Activated T-helper 1 cell treated with anti-CD3 and anti-CD28 coated beads, Interleukin-12 subunit alpha, Interleukin-12 subunit beta, Interleukin-2, Interleukin-4 antibody, amounts not matched to agents 30 ng/mL and 10 ng/mL and 1 ng/mL, durations not matched to agents 14 hours and 24 hours and 36 hours (primary cell): ENCODE measurements at regions of chr1 and their contacts with region 1.

Region 1: GRCh38 chr1:46527474-46528296 is 23.8 kb downstream of the KNCN start:
- DNase-seq: peak; percentile 64
- H3K4me3 Mint-ChIP-seq: no peak overlapping the region
- H3K27ac Mint-ChIP-seq: peak overlapping the region; percentile 18
- H3K4me1 Mint-ChIP-seq: peaks cover 23% of the 10 kb centered on the region
- H3K27me3 Mint-ChIP-seq: peaks cover 16% of the 10 kb centered on the region

Region 2: GRCh38 chr1:46043458-46044017 is 484.1 kb before region 1 on chr1:
- intact Hi-C with region 1: no loop called
- DNase-seq: no peak
- H3K4me3 Mint-ChIP-seq: no peak overlapping the region
- H3K27ac Mint-ChIP-seq: no peak overlapping the region
- H3K4me1 Mint-ChIP-seq: no peaks in the 10 kb centered on the region
- H3K27me3 Mint-ChIP-seq: peaks cover 1% of the 10 kb centered on the region

Region 3: GRCh38 chr1:46406881-46407608 is 120.6 kb before region 1 on chr1:
- intact Hi-C with region 1: loop called (anchors 1 kb)
- DNase-seq: no peak
- H3K4me3 Mint-ChIP-seq: no peak overlapping the region
- H3K27ac Mint-ChIP-seq: no peak overlapping the region
- H3K4me1 Mint-ChIP-seq: no peaks in the 10 kb centered on the region
- H3K27me3 Mint-ChIP-seq: no peaks in the 10 kb centered on the region

Region 4: GRCh38 chr1:46477153-46477929 is 50.3 kb before region 1 on chr1:
- intact Hi-C with region 1: loop called (anchors 1 kb)
- DNase-seq: peak; percentile 63
- H3K4me3 Mint-ChIP-seq: no peak overlapping the region
- H3K27ac Mint-ChIP-seq: no peak overlapping the region
- H3K4me1 Mint-ChIP-seq: no peaks in the 10 kb centered on the region
- H3K27me3 Mint-ChIP-seq: peaks cover 47% of the 10 kb centered on the region

Region 5: GRCh38 chr1:46517010-46517600 is 10.6 kb before region 1 on chr1:
- intact Hi-C with region 1: no loop called
- DNase-seq: no peak
- H3K4me3 Mint-ChIP-seq: no peak overlapping the region
- H3K27ac Mint-ChIP-seq: no peak overlapping the region
- H3K4me1 Mint-ChIP-seq: peaks cover 16% of the 10 kb centered on the region
- H3K27me3 Mint-ChIP-seq: peaks cover 34% of the 10 kb centered on the region

Region 6: DNA sequence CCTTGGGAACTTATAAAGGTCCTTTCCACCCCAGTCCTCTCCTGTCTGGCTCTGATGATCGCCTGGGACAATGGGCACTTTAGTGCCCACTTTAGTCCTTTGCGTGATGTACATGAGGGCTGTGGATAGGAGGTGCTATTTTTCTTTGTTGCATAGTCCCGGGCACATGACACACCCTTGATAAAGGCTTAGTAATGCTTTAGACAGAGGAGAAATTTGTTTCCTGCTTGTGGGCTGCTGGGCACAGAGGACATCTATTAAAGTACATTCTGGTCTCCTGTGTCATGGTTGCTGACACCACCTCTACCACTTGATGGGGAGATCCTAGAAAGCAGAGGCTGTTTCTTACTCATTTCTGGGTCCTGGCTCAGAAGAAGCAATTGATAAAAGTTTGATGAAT is 29.1 kb after region 1 on chr1:
- intact Hi-C with region 1: no loop called
- DNase-seq: no peak
- H3K4me3 Mint-ChIP-seq: no peak overlapping the region
- H3K27ac Mint-ChIP-seq: no peak overlapping the region
- H3K4me1 Mint-ChIP-seq: peaks cover 9% of the 10 kb centered on the region
- H3K27me3 Mint-ChIP-seq: no peaks in the 10 kb centered on the region

Region 7: GRCh38 chr1:46603858-46604549 is 76.3 kb after region 1 on chr1 and contains the start of gene MKNK1:
- intact Hi-C with region 1: loop called (anchors 5 kb)
- DNase-seq: peak; percentile 99
- H3K4me3 Mint-ChIP-seq: peak within 1 kb of the TSS; percentile 91
- H3K27ac Mint-ChIP-seq: peak within 1 kb of the TSS; percentile 88
- H3K4me1 Mint-ChIP-seq: peaks cover 67% of the 10 kb centered on the region
- H3K27me3 Mint-ChIP-seq: no peaks in the 10 kb centered on the region
- total RNA-seq, gene MKNK1: 48.7 TPM in 2 replicates

Region 8: DNA sequence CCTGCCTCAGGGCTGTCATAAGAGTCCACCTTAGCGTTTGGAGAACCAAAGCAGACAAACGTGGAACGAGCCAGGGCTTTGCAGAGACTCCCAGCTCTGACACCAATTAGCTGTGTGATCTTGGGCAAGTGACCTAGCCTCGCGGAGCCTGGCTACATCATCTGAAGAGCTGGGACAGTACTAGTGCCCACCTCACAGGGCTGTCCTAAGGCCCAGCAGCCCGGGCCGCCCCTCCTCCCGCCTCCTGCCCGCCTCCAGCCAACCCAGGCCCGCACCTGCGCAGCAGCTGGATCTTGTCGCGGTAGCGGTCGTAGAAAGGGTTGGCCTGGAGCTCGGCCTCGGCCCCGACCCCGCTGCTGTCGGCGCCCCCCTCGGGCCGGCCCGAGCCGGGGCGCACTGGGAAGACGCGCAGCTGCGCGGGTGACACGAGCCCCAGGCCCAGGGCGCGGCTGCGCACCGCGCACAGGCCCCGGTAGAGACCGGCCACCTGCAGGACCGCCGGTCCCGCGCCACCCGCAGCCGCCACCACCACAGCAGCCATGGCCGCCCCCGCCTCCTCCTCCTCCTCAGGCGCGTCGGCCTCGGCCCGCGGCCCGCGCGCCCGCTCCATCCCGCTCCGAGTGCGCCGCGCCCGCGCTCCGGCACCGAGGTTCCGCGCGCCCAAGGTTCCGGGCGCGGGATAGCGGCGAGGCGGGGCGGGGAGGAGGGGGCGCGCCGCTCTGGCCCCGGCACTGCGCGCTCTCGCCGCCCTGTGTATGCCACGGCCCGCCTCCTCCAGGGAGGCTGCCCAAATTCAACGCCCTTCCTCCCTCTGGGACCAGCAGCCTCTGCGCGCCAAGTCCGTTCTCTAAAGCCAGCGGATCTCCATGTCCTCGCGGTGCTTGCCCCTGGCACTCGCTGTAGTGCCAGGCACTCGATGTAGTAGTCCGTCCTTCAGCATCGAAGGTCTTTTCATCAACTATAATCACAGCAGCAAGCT is 140.4 kb after region 1 on chr1 and contains the start of gene ATPAF1:
- intact Hi-C with region 1: loop called (anchors 5 kb)
- DNase-seq: peak; percentile 62
- H3K4me3 Mint-ChIP-seq: peak within 1 kb of the TSS; percentile 85
- H3K27ac Mint-ChIP-seq: peak within 1 kb of the TSS; percentile 58
- H3K4me1 Mint-ChIP-seq: peaks cover 25% of the 10 kb centered on the region
- H3K27me3 Mint-ChIP-seq: no peaks in the 10 kb centered on the region
- total RNA-seq, gene ATPAF1: 40.9 and 46.3 TPM in 2 replicates